Ascending aorta (tissue), 2 donors: ENCODE measurements at regions of chr2 and their contacts with region 1.

Region 1: DNA sequence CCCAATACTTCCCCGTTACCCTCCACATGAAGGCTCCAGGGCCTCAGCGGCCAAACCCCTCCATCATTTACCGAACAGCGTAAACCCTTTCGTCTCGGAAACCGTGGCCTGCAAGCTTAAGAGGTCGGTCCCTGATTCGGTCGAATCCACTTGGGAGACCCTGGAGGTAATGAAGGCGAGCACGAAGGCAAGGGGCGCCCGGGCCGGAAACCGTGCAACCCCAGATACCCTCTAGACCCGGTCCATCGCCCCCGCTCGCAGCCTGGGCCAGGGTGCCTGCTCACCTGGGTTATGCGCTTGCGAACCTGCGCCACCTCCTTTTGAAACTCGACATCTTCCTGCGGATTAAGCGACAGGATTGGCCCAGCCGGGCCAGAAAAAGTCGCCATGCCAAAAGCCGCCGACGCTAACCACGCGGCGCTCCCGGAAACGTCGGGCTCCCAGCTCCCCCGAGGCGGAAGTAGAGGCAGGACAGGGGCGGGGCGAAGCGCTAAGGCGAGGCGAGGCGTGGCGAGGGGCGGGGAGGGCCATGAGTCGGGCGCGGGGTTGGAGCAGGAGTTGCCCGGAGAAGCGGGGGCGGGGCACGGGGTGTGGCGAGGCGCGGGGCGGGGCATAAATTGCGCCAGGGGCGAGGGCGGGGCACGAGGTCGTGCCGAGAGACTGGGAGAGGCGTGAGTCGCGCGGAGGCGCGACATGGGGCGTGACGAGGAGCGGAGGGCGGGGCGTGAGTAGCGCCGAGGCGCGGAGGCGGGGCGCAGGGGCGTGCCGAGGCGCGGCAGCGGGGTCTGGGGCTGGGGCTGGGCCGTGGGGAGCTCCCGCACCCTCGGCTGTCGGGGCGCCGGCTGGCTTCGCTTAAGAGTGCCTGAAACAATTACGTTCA is at the start of gene NIFK:
- DNase-seq: peak; percentile 96 to 100
- H3K4me3 ChIP-seq: peak within 1 kb of the TSS; percentile 76 to 91
- H3K27ac ChIP-seq: peak within 1 kb of the TSS; percentile 68 to 89
- H3K4me1 ChIP-seq: no peaks in the 10 kb centered on the region
- H3K27me3 ChIP-seq: no peaks in the 10 kb centered on the region
- CTCF ChIP-seq: peak in 1 of 3 experiments; percentile 5
- total RNA-seq, gene NIFK: 31.9 TPM

Region 2: GRCh38 chr2:121530212-121530705 is 206.4 kb before region 1 on chr2:
- intact Hi-C with region 1: loop called (anchors 1 kb)
- DNase-seq: peak in 1 of 2 donors; percentile 86
- H3K4me3 ChIP-seq: peak overlapping the region; percentile 79 to 88
- H3K27ac ChIP-seq: peak overlapping the region; percentile 96 to 99
- H3K4me1 ChIP-seq: peaks cover 7 to 13% of the 10 kb centered on the region in 2 donors
- H3K27me3 ChIP-seq: no peaks in the 10 kb centered on the region
- CTCF ChIP-seq: no peak

Region 3: GRCh38 chr2:121722479-121722878 is 14.2 kb before region 1 on chr2:
- intact Hi-C with region 1: loop called (anchors 1 kb)
- DNase-seq: no peak
- H3K4me3 ChIP-seq: no peak overlapping the region
- H3K27ac ChIP-seq: peak overlapping the region; percentile 58 to 78
- H3K4me1 ChIP-seq: no peaks in the 10 kb centered on the region
- H3K27me3 ChIP-seq: no peaks in the 10 kb centered on the region
- CTCF ChIP-seq: no peak

Region 4: DNA sequence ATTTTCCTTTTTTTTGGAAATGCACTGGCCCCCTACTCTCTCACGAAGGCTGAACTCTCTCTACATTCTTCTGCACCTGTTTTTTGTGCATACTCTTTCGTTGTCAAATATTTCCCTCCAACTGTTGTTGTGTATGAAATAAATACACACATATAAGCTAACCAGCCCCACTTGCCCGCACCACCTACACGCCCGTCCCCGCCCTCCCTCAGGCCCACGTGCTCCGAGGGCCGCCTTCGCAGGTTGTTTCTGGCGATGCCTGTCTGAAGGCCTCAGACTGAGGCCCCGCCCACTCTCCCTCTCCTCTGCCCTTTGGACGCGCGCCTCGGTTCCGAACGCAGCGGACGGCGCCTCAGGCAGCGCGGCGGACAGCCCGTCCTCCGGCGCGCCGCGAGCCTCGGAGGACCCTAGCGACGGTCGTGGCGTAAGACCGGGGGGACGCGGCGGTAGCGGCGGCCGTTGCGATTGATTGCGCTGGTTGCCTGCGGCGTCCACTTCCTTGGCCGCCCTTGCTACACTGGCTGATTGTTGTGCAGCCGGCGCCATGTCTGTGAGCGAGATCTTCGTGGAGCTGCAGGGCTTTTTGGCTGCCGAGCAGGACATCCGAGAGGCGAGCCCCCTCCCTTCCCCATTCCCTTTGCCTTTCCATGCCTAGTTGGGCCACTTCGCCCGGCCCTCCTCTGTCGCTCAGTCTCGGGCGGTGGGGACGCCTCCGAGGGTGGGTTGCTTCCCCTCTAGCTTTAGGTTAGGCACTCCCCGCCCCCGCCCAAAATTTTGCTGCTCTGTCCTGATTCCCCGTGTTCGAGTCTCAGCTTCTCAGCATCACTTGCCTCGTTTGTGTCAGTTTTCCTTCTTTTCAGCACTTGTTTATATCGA is 18.8 kb after region 1 on chr2 and contains the start of gene TSN:
- intact Hi-C with region 1: loop called (anchors 1 kb)
- DNase-seq: peak; percentile 87 to 98
- H3K4me3 ChIP-seq: peak within 1 kb of the TSS; percentile 90 to 94
- H3K27ac ChIP-seq: peak within 1 kb of the TSS; percentile 71 to 78
- H3K4me1 ChIP-seq: peaks cover 5 to 18% of the 10 kb centered on the region in 2 donors
- H3K27me3 ChIP-seq: no peaks in the 10 kb centered on the region
- CTCF ChIP-seq: peak in 1 of 3 experiments; percentile 4
- total RNA-seq, gene TSN: 42.6 TPM